Vagina (tissue), 2 donors: ENCODE measurements at regions of chr3 and their contacts with region 1.

Region 1: GRCh38 chr3:134794950-134795745 is at the start of gene EPHB1:
- DNase-seq: peak; percentile 90 to 96
- H3K4me3 ChIP-seq: peak within 1 kb of the TSS; percentile 45 to 57
- H3K27ac ChIP-seq: no peak within 1 kb of the TSS
- H3K4me1 ChIP-seq: peaks cover 24% of the 10 kb centered on the region
- H3K27me3 ChIP-seq: no peaks in the 10 kb centered on the region
- CTCF ChIP-seq: peak; percentile 44 to 79 (median 66)
- POLR2A ChIP-seq: peak in 1 of 2 donors; percentile 16
- total RNA-seq, gene EPHB1: 2.2 TPM

Region 2: DNA sequence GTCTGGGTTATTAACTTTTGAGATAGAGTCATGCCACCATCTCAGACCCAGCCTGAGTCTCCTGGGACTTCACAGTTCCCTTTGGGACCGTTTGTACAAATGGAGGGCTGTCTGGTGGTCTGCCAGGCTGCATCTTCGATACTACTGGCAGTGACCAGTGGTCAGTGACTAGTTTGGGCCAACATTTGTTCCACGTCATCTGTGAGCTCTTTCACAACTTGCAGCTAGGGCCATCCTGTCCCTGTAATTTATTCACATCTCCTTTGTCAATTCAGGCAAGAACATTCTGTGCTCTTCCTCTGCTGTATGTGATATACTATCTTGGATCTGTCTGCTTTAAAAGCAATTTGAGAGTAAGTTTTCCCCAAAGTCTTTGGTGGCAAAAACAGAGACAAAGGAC is 353.2 kb after region 1 on chr3:
- intact Hi-C with region 1: loop called (anchors 5 kb)
- DNase-seq: no peak
- H3K4me3 ChIP-seq: no peak overlapping the region
- H3K27ac ChIP-seq: no peak overlapping the region
- H3K4me1 ChIP-seq: no peaks in the 10 kb centered on the region
- H3K27me3 ChIP-seq: no peaks in the 10 kb centered on the region
- CTCF ChIP-seq: no peak
- POLR2A ChIP-seq: no peak